CD8-positive, alpha-beta T cell (primary cell): ENCODE measurements at regions of chr16 and their contacts with region 1.

Region 1: DNA sequence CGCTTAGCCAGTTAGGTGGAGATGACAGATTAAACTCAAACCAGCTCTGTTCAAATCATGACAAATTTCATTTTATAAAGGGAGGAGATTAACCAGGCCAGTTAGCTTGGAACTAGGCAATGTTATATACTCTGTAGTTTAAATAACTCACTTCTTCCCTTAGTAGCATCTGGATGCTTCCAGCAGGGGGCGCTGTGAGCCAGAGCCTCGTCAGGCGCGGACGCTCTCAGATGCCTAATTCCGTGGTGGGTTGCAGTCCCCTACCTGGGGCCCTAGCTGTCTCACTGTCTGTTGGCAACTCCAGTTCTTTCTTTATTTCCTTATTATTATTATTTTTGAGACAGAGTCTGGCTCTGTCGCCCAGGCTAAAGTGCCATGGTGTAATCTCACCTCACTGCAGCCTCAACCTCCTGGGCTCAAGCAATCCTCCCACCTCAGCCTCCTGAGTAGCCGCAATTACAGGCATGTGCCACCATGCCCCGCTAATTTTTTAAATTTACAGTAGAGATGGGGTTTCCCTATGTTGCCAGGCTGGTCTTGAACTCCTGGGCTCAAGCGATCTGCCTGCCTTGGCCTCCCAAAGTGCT is 17.3 kb upstream of the WFDC1 start:
- DNase-seq: peak; percentile 43 to 80 (median 67)
- ATAC-seq: peak; percentile 62
- H3K4me3 ChIP-seq: no peak overlapping the region
- H3K4me3 Mint-ChIP-seq: no peak overlapping the region
- H3K27ac ChIP-seq: no peak overlapping the region
- H3K27ac Mint-ChIP-seq: no peak overlapping the region
- H3K4me1 ChIP-seq: no peaks in the 10 kb centered on the region
- H3K4me1 Mint-ChIP-seq: peaks cover 1% of the 10 kb centered on the region
- H3K27me3 ChIP-seq: no peaks in the 10 kb centered on the region
- H3K27me3 Mint-ChIP-seq: peaks cover 5% of the 10 kb centered on the region
- CTCF ChIP-seq: peak; percentile 82

Region 2: DNA sequence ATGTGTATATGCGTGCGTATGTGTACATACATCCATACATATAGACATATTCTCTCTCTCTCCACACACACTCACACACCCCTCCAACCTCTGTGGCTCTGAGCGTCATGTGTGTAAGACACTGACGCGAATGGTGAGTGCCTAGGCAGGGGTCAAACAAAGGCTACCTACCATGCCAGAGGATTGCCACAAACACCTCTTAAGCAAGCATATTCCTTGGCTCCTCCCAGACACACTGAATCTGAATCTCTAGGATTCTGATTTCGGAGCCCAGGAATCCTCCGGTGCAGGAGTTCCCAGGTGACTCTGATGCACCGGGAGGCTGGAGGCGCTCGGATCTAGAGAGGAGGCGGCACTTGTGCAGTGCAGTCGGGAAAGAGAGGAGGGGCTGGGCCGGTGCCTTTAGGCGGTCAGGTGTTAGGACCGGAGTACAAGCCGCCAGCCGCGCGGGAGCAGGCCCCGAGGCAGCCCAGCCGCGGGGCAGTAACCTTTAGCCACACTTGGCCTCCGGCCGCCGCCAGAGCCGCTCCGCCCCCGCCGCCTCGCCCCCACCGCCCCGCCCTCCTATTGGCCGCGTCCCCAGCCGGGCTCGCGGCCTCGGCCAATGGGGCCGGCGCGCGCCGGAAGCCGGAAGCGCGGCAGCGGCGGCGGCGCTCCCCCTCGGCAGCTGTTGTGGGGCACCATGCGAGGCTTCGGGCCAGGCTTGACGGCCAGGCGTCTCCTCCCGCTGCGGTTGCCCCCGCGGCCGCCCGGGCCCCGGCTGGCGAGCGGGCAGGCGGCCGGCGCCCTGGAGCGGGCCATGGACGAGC is 378.7 kb before region 1 on chr16 and contains the start of gene MLYCD:
- CTCF ChIA-PET with region 1: no interaction called
- POLR2A ChIA-PET with region 1: no interaction called
- intact Hi-C with region 1: no loop called
- DNase-seq: peak; percentile 39 to 86 (median 68)
- ATAC-seq: peak; percentile 90
- H3K4me3 ChIP-seq: peak within 1 kb of the TSS; percentile 73 to 76
- H3K4me3 Mint-ChIP-seq: peak within 1 kb of the TSS; percentile 96
- H3K27ac ChIP-seq: peak within 1 kb of the TSS; percentile 46 to 47
- H3K27ac Mint-ChIP-seq: peak within 1 kb of the TSS; percentile 90
- H3K4me1 ChIP-seq: peaks cover 25% of the 10 kb centered on the region
- H3K4me1 Mint-ChIP-seq: peaks cover 36% of the 10 kb centered on the region
- H3K27me3 ChIP-seq: no peaks in the 10 kb centered on the region
- H3K27me3 Mint-ChIP-seq: peaks cover 10% of the 10 kb centered on the region
- CTCF ChIP-seq: no peak
- total RNA-seq, gene MLYCD: 2.9 to 4.0 TPM

Region 3: DNA sequence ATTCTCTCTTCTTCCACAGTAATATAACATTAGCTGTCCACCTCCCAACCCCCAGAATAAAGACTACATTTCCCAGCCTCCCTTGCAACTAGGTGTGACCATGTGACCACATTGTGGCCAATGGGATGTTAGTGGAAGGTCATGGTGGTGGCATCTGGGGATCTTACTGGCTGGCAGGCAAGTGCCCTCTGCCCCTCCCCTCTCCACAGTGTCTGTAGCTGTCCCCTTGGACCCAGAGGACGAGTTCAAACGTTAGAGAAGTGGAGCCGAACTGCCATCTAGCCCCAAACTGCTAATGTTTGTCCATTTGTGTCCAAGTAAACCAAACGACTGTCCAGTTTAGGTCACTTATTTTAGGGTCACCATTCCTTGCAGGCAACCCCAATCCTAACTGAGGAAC is 10.9 kb before region 1 on chr16:
- CTCF ChIA-PET with region 1: interaction called, 28 read pairs
- POLR2A ChIA-PET with region 1: no interaction called
- intact Hi-C with region 1: no loop called
- DNase-seq: peak in 4 of 9 experiments; percentile 10 to 50 (median 32)
- ATAC-seq: no peak
- H3K4me3 ChIP-seq: no peak overlapping the region
- H3K4me3 Mint-ChIP-seq: no peak overlapping the region
- H3K27ac ChIP-seq: no peak overlapping the region
- H3K27ac Mint-ChIP-seq: no peak overlapping the region
- H3K4me1 ChIP-seq: no peaks in the 10 kb centered on the region
- H3K4me1 Mint-ChIP-seq: no peaks in the 10 kb centered on the region
- H3K27me3 ChIP-seq: no peaks in the 10 kb centered on the region
- H3K27me3 Mint-ChIP-seq: peaks cover 17% of the 10 kb centered on the region
- CTCF ChIP-seq: no peak

Region 4: GRCh38 chr16:84380405-84380804 is 103.1 kb after region 1 on chr16:
- CTCF ChIA-PET with region 1: no interaction called
- POLR2A ChIA-PET with region 1: no interaction called
- intact Hi-C with region 1: no loop called
- DNase-seq: peak in 1 of 9 experiments; percentile 23
- ATAC-seq: peak; percentile 40
- H3K4me3 ChIP-seq: no peak overlapping the region
- H3K4me3 Mint-ChIP-seq: no peak overlapping the region
- H3K27ac ChIP-seq: no peak overlapping the region
- H3K27ac Mint-ChIP-seq: no peak overlapping the region
- H3K4me1 ChIP-seq: no peaks in the 10 kb centered on the region
- H3K4me1 Mint-ChIP-seq: peaks cover 6% of the 10 kb centered on the region
- H3K27me3 ChIP-seq: no peaks in the 10 kb centered on the region
- H3K27me3 Mint-ChIP-seq: peaks cover 15% of the 10 kb centered on the region
- CTCF ChIP-seq: no peak

Region 5: GRCh38 chr16:84459941-84460405 is 182.6 kb after region 1 on chr16:
- CTCF ChIA-PET with region 1: no interaction called
- POLR2A ChIA-PET with region 1: no interaction called
- intact Hi-C with region 1: no loop called
- DNase-seq: peak in 1 of 9 experiments; percentile 37
- ATAC-seq: no peak
- H3K4me3 ChIP-seq: no peak overlapping the region
- H3K4me3 Mint-ChIP-seq: no peak overlapping the region
- H3K27ac ChIP-seq: no peak overlapping the region
- H3K27ac Mint-ChIP-seq: no peak overlapping the region
- H3K4me1 ChIP-seq: no peaks in the 10 kb centered on the region
- H3K4me1 Mint-ChIP-seq: no peaks in the 10 kb centered on the region
- H3K27me3 ChIP-seq: no peaks in the 10 kb centered on the region
- H3K27me3 Mint-ChIP-seq: no peaks in the 10 kb centered on the region
- CTCF ChIP-seq: no peak

Region 6: GRCh38 chr16:84484579-84485254 is 207.4 kb after region 1 on chr16:
- CTCF ChIA-PET with region 1: interaction called, 9 read pairs
- POLR2A ChIA-PET with region 1: no interaction called
- intact Hi-C with region 1: loop called (anchors 2 to 5 kb)
- DNase-seq: peak in 1 of 9 experiments; percentile 51
- ATAC-seq: no peak
- H3K4me3 ChIP-seq: no peak overlapping the region
- H3K4me3 Mint-ChIP-seq: no peak overlapping the region
- H3K27ac ChIP-seq: no peak overlapping the region
- H3K27ac Mint-ChIP-seq: no peak overlapping the region
- H3K4me1 ChIP-seq: no peaks in the 10 kb centered on the region
- H3K4me1 Mint-ChIP-seq: no peaks in the 10 kb centered on the region
- H3K27me3 ChIP-seq: no peaks in the 10 kb centered on the region
- H3K27me3 Mint-ChIP-seq: no peaks in the 10 kb centered on the region
- CTCF ChIP-seq: no peak